A673 (cell line): ENCODE measurements at regions of chr7 and their contacts with region 1.

Region 1: DNA sequence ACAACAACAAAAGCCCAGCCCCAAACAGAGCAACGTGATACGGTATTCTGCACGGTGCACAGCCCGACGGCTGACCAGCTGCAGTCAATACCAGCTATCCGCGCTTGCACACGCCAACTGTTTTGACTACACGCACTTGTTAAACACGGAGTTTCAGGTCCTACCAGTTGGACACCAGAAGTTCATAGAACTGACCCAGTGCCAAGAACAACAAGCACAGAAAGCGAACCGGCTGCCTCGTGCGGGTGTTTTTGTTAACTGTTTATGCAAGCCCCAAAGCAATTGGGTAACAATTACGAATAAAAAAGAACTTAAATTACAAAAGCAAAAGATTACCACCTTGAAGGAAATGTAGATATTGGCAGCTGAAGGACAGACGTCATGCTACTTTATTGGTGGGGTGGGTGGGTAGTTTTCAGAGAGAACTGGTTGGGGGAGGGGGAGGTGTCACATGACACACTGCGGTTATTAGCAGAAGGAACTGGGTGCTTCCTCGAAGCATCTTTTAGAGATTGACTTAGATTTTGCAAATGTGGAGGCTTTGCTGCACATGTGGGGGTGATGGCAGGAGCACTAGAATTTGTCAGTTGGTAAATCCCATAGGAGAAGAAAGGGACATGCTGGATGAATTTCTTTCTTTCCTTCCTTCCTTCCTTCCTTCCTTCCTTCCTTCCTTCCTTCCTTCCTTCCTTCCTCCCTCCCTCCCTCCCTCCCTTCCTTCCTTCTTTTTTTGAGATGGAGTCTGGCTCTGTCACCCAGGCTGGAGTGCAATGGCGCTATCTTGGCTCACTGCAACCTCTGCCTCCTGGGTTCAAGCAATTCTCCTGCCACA is 110.7 kb upstream of the EFCAB10 start:
- DNase-seq: peak; percentile 97
- H3K4me3 ChIP-seq: peak overlapping the region; percentile 48
- H3K27ac ChIP-seq: peak overlapping the region; percentile 98
- H3K4me1 ChIP-seq: peaks cover 45% of the 10 kb centered on the region
- H3K27me3 ChIP-seq: no peaks in the 10 kb centered on the region
- CTCF ChIP-seq: no peak

Region 2: GRCh38 chr7:105230486-105230885 is 461.5 kb before region 1 on chr7:
- CTCF ChIA-PET with region 1: no interaction called
- POLR2A ChIA-PET with region 1: no interaction called
- intact Hi-C with region 1: loop called (anchors 5 kb)
- DNase-seq: no peak
- H3K4me3 ChIP-seq: no peak overlapping the region
- H3K27ac ChIP-seq: no peak overlapping the region
- H3K4me1 ChIP-seq: peaks cover 29% of the 10 kb centered on the region
- H3K27me3 ChIP-seq: no peaks in the 10 kb centered on the region
- CTCF ChIP-seq: no peak

Region 3: DNA sequence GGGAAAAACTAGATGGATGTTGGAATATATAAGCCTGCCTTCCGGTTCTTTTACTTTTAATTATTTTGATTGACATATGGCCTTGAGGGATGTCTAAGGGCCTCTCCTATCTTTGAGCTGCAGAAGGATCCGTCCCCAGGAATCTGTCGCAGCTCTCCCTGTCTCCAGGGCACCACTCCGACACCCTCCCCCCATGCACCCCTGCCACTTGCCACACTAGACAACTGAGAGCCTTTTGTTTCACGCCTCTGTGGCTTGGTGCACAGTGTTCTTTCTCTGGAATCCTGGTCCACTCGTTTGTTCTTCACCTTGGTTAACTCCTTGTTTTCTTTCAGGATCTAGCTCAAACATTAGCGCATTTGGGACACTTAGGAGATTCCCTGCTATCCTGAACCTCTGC is 13.5 kb after region 1 on chr7:
- CTCF ChIA-PET with region 1: no interaction called
- POLR2A ChIA-PET with region 1: interaction called, 11 read pairs
- intact Hi-C with region 1: no loop called
- DNase-seq: no peak
- H3K4me3 ChIP-seq: no peak overlapping the region
- H3K27ac ChIP-seq: no peak overlapping the region
- H3K4me1 ChIP-seq: peaks cover 42% of the 10 kb centered on the region
- H3K27me3 ChIP-seq: no peaks in the 10 kb centered on the region
- CTCF ChIP-seq: no peak

Region 4: GRCh38 chr7:105743351-105744090 is 51.6 kb after region 1 on chr7:
- CTCF ChIA-PET with region 1: no interaction called
- POLR2A ChIA-PET with region 1: no interaction called
- intact Hi-C with region 1: loop called (anchors 5 kb)
- DNase-seq: peak; percentile 90
- H3K4me3 ChIP-seq: peak overlapping the region; percentile 6
- H3K27ac ChIP-seq: peak overlapping the region; percentile 79
- H3K4me1 ChIP-seq: peaks cover 45% of the 10 kb centered on the region
- H3K27me3 ChIP-seq: no peaks in the 10 kb centered on the region
- CTCF ChIP-seq: no peak

Region 5: GRCh38 chr7:105876091-105876963 is 184.4 kb after region 1 on chr7 and contains the start of gene ATXN7L1:
- CTCF ChIA-PET with region 1: interaction called, 3 read pairs
- POLR2A ChIA-PET with region 1: no interaction called
- intact Hi-C with region 1: loop called (anchors 2 kb)
- DNase-seq: peak; percentile 99
- H3K4me3 ChIP-seq: peak within 1 kb of the TSS; percentile 77
- H3K27ac ChIP-seq: peak within 1 kb of the TSS; percentile 93
- H3K4me1 ChIP-seq: no peaks in the 10 kb centered on the region
- H3K27me3 ChIP-seq: no peaks in the 10 kb centered on the region
- CTCF ChIP-seq: peak; percentile 40; the same call in 1 of the 2 replicates
- total RNA-seq, gene ATXN7L1: 29.9 and 32.8 TPM in 2 replicates

Region 6: GRCh38 chr7:106041140-106041717 is 349.3 kb after region 1 on chr7:
- CTCF ChIA-PET with region 1: interaction called, 3 read pairs
- POLR2A ChIA-PET with region 1: no interaction called
- intact Hi-C with region 1: loop called (anchors 5 kb)
- DNase-seq: peak; percentile 71
- H3K4me3 ChIP-seq: no peak overlapping the region
- H3K27ac ChIP-seq: no peak overlapping the region
- H3K4me1 ChIP-seq: peaks cover 34% of the 10 kb centered on the region
- H3K27me3 ChIP-seq: no peaks in the 10 kb centered on the region
- CTCF ChIP-seq: peak; percentile 80

Region 7: GRCh38 chr7:106999023-106999422 is 1307.1 kb after region 1 on chr7:
- CTCF ChIA-PET with region 1: no interaction called
- POLR2A ChIA-PET with region 1: no interaction called
- intact Hi-C with region 1: no loop called
- DNase-seq: no peak
- H3K4me3 ChIP-seq: no peak overlapping the region
- H3K27ac ChIP-seq: no peak overlapping the region
- H3K4me1 ChIP-seq: no peaks in the 10 kb centered on the region
- H3K27me3 ChIP-seq: no peaks in the 10 kb centered on the region
- CTCF ChIP-seq: no peak